ENCODE measurements at regions of chr2 and their contacts with region 1.

Region 1: GRCh38 chr2:30421604-30422443 is 25.2 kb upstream of the LCLAT1 start:
- DNase-seq: peak; percentile 37
- H3K4me3 Mint-ChIP-seq: peak overlapping the region; percentile 74
- H3K27ac Mint-ChIP-seq: peak overlapping the region; percentile 94
- H3K4me1 Mint-ChIP-seq: peaks cover 54% of the 10 kb centered on the region
- H3K27me3 Mint-ChIP-seq: no peaks in the 10 kb centered on the region

Region 2: GRCh38 chr2:30026087-30027055 is 395.5 kb before region 1 on chr2:
- CTCF ChIA-PET with region 1: no interaction called
- intact Hi-C with region 1: no loop called
- DNase-seq: peak; percentile 14
- H3K4me3 Mint-ChIP-seq: no peak overlapping the region
- H3K27ac Mint-ChIP-seq: no peak overlapping the region
- H3K4me1 Mint-ChIP-seq: no peaks in the 10 kb centered on the region
- H3K27me3 Mint-ChIP-seq: peaks cover 5% of the 10 kb centered on the region

Region 3: GRCh38 chr2:30225131-30225762 is 196.6 kb before region 1 on chr2:
- CTCF ChIA-PET with region 1: interaction called, 6 read pairs
- intact Hi-C with region 1: loop called (anchors 1 kb)
- DNase-seq: peak; percentile 60
- H3K4me3 Mint-ChIP-seq: peak overlapping the region; percentile 81
- H3K27ac Mint-ChIP-seq: peak overlapping the region; percentile 87
- H3K4me1 Mint-ChIP-seq: peaks cover 64% of the 10 kb centered on the region
- H3K27me3 Mint-ChIP-seq: peaks cover 3% of the 10 kb centered on the region

Region 4: GRCh38 chr2:30252723-30253701 is 168.8 kb before region 1 on chr2:
- CTCF ChIA-PET with region 1: no interaction called
- intact Hi-C with region 1: loop called (anchors 1 kb)
- DNase-seq: peak; percentile 87
- H3K4me3 Mint-ChIP-seq: peak overlapping the region; percentile 14
- H3K27ac Mint-ChIP-seq: peak overlapping the region; percentile 81
- H3K4me1 Mint-ChIP-seq: peaks cover 94% of the 10 kb centered on the region
- H3K27me3 Mint-ChIP-seq: no peaks in the 10 kb centered on the region

Region 5: GRCh38 chr2:30371772-30372373 is 50.0 kb before region 1 on chr2:
- CTCF ChIA-PET with region 1: interaction called, 3 read pairs
- intact Hi-C with region 1: loop called (anchors 1 kb)
- DNase-seq: no peak
- H3K4me3 Mint-ChIP-seq: no peak overlapping the region
- H3K27ac Mint-ChIP-seq: no peak overlapping the region
- H3K4me1 Mint-ChIP-seq: peaks cover 32% of the 10 kb centered on the region
- H3K27me3 Mint-ChIP-seq: no peaks in the 10 kb centered on the region

Region 6: DNA sequence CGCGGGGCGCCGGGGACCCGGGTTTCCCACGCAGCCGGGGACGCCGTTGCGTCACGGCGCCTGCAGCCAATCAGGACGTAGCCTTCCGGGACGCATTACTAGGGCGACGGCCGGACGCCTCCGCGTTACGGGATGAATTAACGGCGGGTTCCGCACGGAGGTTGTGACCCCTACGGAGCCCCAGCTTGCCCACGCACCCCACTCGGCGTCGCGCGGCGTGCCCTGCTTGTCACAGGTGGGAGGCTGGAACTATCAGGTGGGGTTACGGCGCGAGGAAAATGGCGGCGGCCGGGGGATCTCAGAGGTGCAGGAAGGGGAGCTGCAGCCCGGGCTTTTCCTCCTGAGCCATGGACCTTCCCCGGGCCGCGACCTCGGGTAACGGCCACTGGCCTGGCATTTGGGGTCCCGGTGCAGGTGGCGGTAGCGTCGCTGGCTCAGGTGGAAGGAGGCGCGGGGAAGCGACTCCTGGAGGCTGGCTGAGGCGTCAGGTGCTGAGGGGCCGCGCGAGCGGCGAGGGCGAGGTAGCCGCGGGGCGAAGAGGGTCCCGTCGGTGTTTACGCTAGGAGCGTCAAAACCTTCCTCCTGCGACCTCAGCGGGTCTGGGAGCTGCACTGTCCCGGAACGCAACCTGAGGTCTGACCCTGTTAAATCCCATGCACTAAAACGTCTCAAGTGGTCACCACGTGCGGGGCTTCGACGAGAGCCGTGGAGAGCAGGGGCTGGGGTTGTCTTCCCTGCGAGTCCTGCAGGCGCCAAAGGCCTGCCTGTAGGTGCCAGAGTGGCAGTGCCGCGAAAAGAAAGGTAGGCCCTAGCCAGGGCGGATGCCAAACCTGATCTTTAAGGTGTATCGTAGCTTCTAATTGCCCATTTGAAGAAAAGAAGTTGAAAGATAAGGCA is 25.6 kb after region 1 on chr2 and contains the start of gene LCLAT1:
- CTCF ChIA-PET with region 1: interaction called, 8 read pairs
- intact Hi-C with region 1: loop called (anchors 1 kb)
- DNase-seq: peak; percentile 86
- H3K4me3 Mint-ChIP-seq: peak within 1 kb of the TSS; percentile 90
- H3K27ac Mint-ChIP-seq: peak within 1 kb of the TSS; percentile 95
- H3K4me1 Mint-ChIP-seq: peaks cover 40% of the 10 kb centered on the region
- H3K27me3 Mint-ChIP-seq: no peaks in the 10 kb centered on the region
- total RNA-seq, gene LCLAT1: 18.8 to 22.8 TPM

Region 7: DNA sequence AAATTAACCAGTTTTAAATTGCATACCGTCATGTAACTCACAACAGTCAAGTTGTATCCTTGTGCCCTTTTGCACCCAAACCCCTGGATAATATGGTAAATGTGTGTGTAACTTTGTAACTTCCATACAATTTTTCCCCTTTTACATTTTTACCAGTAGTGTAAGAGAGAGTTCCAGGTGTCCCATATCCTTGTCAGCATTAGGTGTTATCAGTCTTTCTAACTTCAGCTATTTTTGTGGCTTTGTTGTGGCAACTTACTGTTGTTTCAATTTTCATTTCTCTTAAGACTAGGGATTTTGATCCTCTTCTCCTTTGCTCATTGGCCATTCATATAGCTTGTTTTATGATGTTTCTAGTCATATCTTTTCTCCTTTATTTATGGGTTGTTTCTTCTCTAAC is 119.9 kb after region 1 on chr2:
- CTCF ChIA-PET with region 1: no interaction called
- intact Hi-C with region 1: no loop called
- DNase-seq: no peak
- H3K4me3 Mint-ChIP-seq: no peak overlapping the region
- H3K27ac Mint-ChIP-seq: no peak overlapping the region
- H3K4me1 Mint-ChIP-seq: peaks cover 15% of the 10 kb centered on the region
- H3K27me3 Mint-ChIP-seq: no peaks in the 10 kb centered on the region

Region 8: DNA sequence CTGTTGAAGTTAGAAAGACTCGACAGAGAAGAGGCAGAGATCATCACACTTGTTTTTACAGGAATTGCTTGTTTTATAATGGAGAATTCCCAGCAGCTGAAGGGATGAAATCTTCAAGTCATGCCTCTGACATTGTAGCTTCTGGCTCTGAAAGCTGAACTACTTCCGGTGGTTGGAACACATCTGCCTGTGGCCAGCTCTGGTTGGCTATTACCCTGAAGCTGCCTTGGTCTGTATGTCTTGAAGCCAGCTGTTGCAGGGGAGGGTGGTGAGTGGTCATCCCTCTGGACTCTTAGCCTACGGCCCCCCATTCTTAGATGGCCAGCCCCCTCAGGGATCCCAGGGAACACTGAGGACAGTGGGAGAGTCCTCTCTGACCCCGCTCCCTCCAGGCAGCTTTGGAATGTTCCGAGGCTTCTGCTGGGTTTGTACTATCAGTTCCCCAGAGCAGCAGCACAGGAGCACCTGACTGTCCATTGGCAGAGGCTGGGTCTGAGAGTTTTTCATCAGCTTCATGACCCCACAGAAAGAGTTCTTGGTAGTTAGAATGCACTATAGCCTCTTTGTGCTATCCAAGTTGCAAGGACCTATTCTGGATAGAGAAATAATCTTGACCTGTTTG is 472.8 kb after region 1 on chr2:
- CTCF ChIA-PET with region 1: no interaction called
- intact Hi-C with region 1: no loop called
- DNase-seq: no peak
- H3K4me3 Mint-ChIP-seq: no peak overlapping the region
- H3K27ac Mint-ChIP-seq: no peak overlapping the region
- H3K4me1 Mint-ChIP-seq: no peaks in the 10 kb centered on the region
- H3K27me3 Mint-ChIP-seq: peaks cover 5% of the 10 kb centered on the region

Region 9: DNA sequence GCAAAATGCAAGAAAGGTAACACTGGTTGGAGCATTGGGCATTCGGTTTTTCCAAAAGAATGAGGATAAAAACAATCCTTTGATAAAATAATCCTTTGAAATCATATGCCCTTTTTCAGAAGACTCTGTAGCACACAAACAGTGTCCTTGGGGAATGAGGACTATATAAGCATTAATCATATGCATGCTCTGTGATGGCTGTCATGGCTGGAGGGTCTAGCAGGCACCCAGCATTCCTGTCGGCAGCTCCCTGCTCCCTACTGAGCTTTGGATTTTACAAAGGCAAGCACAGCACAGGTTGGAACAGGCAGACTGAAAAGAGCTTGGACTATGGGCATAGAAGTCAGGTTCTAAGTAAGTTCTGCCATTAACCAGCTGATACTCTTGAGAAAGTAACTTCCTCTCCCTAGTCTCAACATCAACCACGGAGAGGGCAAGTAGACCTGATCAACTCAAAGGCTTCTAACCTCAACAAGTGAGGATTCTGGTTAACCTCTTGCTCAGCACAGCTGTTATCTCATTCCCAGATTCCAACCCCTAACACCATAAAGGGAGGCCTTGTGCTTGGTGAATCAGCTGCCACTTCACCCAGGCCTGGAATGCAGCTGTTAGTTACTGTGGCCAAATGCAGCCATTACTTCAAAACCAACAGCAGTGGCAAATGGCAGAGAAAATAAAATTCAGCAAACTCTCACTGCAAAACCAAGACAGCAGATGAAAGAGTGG is 686.9 kb after region 1 on chr2:
- CTCF ChIA-PET with region 1: no interaction called
- intact Hi-C with region 1: no loop called
- DNase-seq: no peak
- H3K4me3 Mint-ChIP-seq: no peak overlapping the region
- H3K27ac Mint-ChIP-seq: no peak overlapping the region
- H3K4me1 Mint-ChIP-seq: no peaks in the 10 kb centered on the region
- H3K27me3 Mint-ChIP-seq: peaks cover 20% of the 10 kb centered on the region